Dendritic cell treated with granulocyte-macrophage colony-stimulating factor and Interleukin-4, amounts not matched to agents 40 ng/mL and 50 ng/mL, for 4 days (primary cell): ENCODE measurements at regions of chr3 and their contacts with region 1.

Region 1: DNA sequence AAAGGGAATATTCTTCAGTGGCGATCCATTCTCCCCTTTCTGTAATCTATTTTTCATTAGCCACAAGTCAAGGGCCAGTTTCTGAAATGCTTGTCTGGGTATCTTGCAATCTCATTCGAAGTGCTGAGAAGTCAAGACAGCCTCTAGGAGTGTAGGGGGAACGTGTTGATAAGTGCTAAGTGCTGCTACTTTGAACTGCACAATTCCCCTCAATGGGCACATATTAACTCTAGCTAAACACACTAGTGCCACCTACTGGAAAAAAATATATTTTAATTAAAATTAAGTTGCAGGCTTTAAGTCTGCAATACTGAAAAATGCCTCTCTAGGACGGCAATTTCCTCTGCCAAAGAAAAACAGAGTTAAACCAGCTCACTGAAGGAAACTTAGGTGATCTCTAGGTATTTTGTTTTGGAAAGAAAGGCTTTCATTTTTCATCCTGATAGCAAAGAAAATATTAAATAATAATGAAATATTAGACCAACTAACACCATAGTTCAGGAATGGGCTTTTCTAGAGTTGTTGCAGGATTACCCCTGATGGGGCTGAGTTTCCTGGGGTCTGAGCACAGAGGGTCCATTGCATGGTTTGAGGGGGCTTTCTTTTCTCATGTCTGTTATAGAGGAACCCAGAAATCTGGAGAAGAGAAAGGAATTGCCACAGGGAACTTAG is 181.9 kb upstream of the KBTBD8 start:
- H3K4me3 Mint-ChIP-seq: no peak overlapping the region
- H3K27ac Mint-ChIP-seq: no peak overlapping the region
- H3K4me1 Mint-ChIP-seq: no peaks in the 10 kb centered on the region
- H3K27me3 Mint-ChIP-seq: peaks cover 6% of the 10 kb centered on the region

Region 2: DNA sequence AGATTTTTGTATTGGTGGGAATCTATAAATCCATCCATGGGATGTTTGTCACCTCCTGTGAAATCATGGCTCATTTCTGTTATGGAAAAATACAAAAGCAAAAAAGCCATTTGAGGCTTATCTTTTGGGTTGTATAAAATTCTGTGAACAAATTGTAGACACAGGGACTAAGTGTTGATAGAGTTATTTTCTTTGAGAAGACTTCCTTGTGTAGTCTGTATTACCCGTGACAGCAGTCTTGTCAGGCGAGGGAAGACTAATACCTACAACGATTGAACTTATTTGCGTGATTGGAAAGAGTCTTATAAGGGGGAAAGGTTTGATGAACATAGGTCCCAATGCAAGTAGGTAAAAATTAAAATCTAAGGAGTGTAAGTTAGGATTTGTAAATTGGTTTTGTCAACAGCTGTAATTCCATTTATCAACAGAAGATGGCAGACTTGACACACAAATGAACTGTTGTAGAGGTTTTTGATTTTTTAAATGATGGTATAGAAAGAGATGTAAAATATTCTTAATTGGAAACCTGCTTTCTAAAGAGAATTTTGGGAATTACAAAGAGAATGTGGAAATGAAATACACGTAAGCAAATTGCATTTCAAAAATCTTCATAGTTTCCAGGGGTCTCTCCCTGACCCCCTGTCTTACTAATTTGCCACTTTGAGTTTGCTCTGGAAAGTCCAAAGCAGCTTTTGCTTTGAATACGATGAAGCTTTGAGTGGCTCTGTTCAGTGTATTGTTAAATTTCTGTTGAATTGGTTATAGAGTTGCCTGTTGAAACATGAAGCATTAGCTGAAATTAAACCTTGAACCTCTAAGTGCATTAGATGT is 562.2 kb before region 1 on chr3:
- intact Hi-C with region 1: loop called (anchors 1 kb)
- H3K4me3 Mint-ChIP-seq: no peak overlapping the region
- H3K27ac Mint-ChIP-seq: no peak overlapping the region
- H3K4me1 Mint-ChIP-seq: peaks cover 18% of the 10 kb centered on the region
- H3K27me3 Mint-ChIP-seq: no peaks in the 10 kb centered on the region

Region 3: DNA sequence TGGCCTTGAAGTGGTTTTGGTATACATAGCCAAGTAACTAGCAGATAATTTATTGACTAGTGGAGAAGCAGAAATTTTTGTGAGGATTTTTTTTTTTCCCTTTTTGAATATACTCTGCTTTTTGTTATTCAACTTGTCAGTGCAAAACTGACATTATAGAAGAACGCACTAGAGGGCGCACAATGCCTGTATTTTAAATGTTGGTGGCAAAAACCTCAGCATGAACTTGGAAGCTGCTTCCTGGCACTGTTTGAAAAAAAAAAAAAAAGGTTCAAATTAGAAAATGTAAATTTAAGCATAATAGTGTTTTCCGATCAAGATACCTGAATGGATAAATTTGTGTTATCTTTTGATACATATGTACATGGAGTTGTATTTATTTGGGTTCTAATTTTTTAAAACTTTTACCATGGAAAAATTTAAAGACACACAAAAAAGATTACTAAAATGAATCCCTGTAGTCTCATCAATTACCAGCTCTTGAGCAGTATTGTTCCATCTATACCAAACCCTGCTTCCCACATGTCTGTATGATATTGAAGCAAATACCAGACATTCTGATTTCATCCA is 539.4 kb before region 1 on chr3:
- intact Hi-C with region 1: loop called (anchors 1 kb)
- H3K4me3 Mint-ChIP-seq: no peak overlapping the region
- H3K27ac Mint-ChIP-seq: no peak overlapping the region
- H3K4me1 Mint-ChIP-seq: no peaks in the 10 kb centered on the region
- H3K27me3 Mint-ChIP-seq: no peaks in the 10 kb centered on the region

Region 4: DNA sequence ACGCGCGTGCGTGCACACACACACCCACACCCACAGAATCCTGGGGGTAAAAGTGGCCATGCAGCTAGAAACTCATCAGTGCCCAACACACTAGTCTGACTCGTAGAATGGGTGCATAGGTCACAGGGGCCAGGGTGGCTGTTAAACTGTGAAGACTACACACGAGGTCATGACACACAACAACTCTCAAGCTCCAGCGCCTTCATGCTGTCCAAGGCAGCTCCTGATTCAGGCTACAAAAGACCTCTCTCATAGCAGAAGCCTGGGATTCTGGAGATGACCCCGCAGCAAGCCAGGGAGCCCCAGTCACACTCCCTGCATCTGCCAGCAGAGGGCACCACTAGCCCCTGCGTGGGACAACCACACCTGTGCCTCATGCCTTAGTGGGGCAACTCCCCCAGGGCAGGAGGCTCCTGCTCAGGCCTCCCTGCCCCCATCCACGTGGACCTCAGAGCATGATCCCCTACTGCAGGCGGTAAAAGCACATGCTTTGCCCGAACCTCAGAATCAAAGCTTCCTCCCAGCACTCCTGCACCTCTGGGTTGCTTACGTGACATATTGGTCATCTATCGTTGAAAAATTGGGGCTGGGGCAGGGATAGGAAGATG is 408.5 kb before region 1 on chr3:
- intact Hi-C with region 1: loop called (anchors 1 kb)
- H3K4me3 Mint-ChIP-seq: no peak overlapping the region
- H3K27ac Mint-ChIP-seq: no peak overlapping the region
- H3K4me1 Mint-ChIP-seq: no peaks in the 10 kb centered on the region
- H3K27me3 Mint-ChIP-seq: no peaks in the 10 kb centered on the region

Region 5: GRCh38 chr3:66638717-66639116 is 177.5 kb before region 1 on chr3:
- intact Hi-C with region 1: loop called (anchors 5 kb)
- H3K4me3 Mint-ChIP-seq: no peak overlapping the region
- H3K27ac Mint-ChIP-seq: no peak overlapping the region
- H3K4me1 Mint-ChIP-seq: peaks cover 21% of the 10 kb centered on the region
- H3K27me3 Mint-ChIP-seq: peaks cover under 1% of the 10 kb centered on the region